ENCODE measurements at regions of chr18 and their contacts with region 1.

Region 1: DNA sequence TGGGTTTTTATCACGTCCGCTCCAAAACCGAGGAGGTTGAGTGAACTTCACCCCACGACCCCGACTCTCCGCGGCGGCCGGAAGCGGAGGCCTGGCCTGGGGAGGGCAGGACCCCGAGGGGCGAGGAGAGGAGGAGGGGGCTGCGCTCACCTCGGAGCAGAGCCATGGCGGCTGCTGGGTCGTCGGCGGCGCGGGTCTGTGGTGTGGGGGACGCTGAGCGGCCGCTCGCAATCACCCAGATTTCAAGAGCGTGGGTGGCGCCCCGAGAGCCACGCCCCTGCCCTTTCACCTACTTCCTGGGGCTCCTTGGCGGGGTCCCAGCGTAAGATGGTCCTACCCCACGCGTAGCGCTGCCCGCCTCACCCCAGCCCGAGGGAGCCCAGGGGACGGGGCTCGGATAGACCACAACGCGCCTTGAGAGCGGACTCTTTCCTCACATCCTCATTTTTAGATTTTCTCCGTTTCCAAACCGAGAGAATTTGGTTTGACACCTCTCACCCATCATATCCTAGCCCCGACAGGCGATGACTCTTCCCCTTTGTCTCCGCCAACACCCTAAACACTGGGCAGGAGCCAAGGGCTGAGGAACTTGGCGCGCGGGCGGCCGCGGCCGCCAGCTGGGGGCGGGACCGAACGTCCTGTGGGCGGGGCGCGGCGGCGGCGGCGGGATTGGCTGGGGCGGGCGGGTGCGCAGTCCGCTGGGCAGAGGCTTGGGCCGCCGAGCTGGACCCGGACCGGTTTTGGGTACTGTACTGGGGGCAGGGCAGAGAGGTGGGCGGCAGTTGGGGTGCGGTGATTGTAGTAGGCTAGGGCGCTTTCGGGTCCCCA is at the start of gene ACAA2:
- DNase-seq: peak; percentile 53 to 91 (median 77)
- ATAC-seq: peak; percentile 81
- H3K4me3 ChIP-seq: peak within 1 kb of the TSS; percentile 88 to 93
- H3K4me3 Mint-ChIP-seq: peak within 1 kb of the TSS; percentile 97
- H3K27ac ChIP-seq: peak within 1 kb of the TSS; percentile 90 to 95
- H3K27ac Mint-ChIP-seq: peak within 1 kb of the TSS; percentile 95
- H3K4me1 ChIP-seq: peaks cover 37% of the 10 kb centered on the region
- H3K4me1 Mint-ChIP-seq: peaks cover 62% of the 10 kb centered on the region
- H3K27me3 ChIP-seq: no peaks in the 10 kb centered on the region
- H3K27me3 Mint-ChIP-seq: no peaks in the 10 kb centered on the region
- CTCF ChIP-seq: no peak
- total RNA-seq, gene ACAA2: 9.5 to 10.0 TPM

Region 2: DNA sequence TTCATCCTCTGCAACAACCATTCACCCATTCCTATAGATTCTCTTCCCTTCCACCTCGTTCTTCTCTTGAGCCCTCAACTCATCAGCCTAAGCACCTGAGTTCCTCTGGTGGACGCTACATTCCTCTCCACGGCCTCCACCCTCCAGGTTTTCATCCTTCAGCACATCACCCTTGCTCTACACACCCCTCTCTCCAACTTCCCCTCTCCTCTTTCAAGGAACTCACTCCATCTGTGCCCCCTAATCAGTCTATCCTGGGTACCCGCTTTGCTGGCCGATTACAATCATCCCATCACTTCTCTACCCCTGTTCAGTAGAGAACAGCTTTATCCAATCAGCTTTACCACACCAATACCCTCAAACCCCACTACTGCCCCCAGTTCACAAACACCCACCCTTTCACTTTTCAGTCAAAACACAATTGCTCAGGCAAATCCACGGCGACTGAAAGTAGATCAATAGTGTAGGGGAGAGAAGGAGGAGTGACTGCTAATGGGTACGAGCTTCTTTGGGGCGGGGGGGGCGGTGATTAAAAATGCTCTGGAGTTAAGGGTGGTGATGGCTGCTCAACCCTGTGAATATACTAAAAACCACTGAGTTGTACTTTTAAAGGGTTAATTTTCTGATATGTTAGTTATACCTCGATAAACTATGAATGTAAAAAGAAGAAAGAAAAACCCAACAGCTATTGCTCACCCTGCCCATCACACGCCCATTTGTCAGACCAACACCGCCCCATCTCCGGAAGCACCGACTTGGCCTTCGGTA is 353.9 kb before region 1 on chr18:
- CTCF ChIA-PET with region 1: no interaction called
- POLR2A ChIA-PET with region 1: no interaction called
- intact Hi-C with region 1: loop called in 1 of 2 experiments (anchors 1 kb)
- DNase-seq: peak in 4 of 9 experiments; percentile 10 to 54 (median 30)
- ATAC-seq: peak; percentile 9
- H3K4me3 ChIP-seq: peak overlapping the region; percentile 88 to 94
- H3K4me3 Mint-ChIP-seq: peak overlapping the region; percentile 93
- H3K27ac ChIP-seq: peak overlapping the region in 1 of 2 experiments; percentile 74
- H3K27ac Mint-ChIP-seq: peak overlapping the region; percentile 90
- H3K4me1 ChIP-seq: peaks cover 17% of the 10 kb centered on the region
- H3K4me1 Mint-ChIP-seq: peaks cover 52% of the 10 kb centered on the region
- H3K27me3 ChIP-seq: no peaks in the 10 kb centered on the region
- H3K27me3 Mint-ChIP-seq: no peaks in the 10 kb centered on the region
- CTCF ChIP-seq: no peak

Region 3: GRCh38 chr18:49795612-49796552 is 17.7 kb before region 1 on chr18:
- CTCF ChIA-PET with region 1: no interaction called
- POLR2A ChIA-PET with region 1: interaction called, 3 read pairs
- intact Hi-C with region 1: loop called in 1 of 2 experiments (anchors 2 kb)
- DNase-seq: no peak
- ATAC-seq: no peak
- H3K4me3 ChIP-seq: no peak overlapping the region
- H3K4me3 Mint-ChIP-seq: no peak overlapping the region
- H3K27ac ChIP-seq: no peak overlapping the region
- H3K27ac Mint-ChIP-seq: no peak overlapping the region
- H3K4me1 ChIP-seq: no peaks in the 10 kb centered on the region
- H3K4me1 Mint-ChIP-seq: no peaks in the 10 kb centered on the region
- H3K27me3 ChIP-seq: no peaks in the 10 kb centered on the region
- H3K27me3 Mint-ChIP-seq: no peaks in the 10 kb centered on the region
- CTCF ChIP-seq: no peak

Region 4: DNA sequence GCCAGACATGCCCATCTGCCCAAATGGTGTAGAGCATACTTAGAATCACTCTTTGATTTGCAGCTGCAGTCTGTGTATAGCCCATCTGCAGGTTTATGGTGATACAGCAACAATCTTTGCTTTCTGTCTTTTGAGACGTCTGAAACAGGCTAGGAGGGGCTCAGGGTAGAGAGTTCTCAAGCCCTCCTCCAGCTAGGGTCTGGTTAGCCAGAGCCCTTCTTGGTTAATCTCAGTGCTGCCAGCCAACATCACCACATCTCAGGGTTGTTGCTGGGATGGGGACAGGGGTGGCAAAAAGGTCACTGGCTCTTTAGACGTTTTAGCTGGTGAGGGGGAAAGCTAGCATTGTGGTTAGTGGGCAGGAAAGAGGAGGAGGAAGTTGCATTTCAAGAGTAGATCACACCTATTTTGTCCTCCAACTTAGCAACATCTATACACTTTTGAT is 136.4 kb after region 1 on chr18:
- CTCF ChIA-PET with region 1: no interaction called
- POLR2A ChIA-PET with region 1: no interaction called
- intact Hi-C with region 1: no loop called
- DNase-seq: peak in 5 of 9 experiments; percentile 1 to 54 (median 36)
- ATAC-seq: peak; percentile 78
- H3K4me3 ChIP-seq: peak overlapping the region in 1 of 2 experiments; percentile 12
- H3K4me3 Mint-ChIP-seq: peak overlapping the region; percentile 68
- H3K27ac ChIP-seq: no peak overlapping the region
- H3K27ac Mint-ChIP-seq: peak overlapping the region; percentile 86
- H3K4me1 ChIP-seq: peaks cover 21% of the 10 kb centered on the region
- H3K4me1 Mint-ChIP-seq: peaks cover 29% of the 10 kb centered on the region
- H3K27me3 ChIP-seq: peaks cover 0 to 2% of the 10 kb centered on the region in 2 experiments
- H3K27me3 Mint-ChIP-seq: peaks cover 14% of the 10 kb centered on the region
- CTCF ChIP-seq: no peak